ENCODE measurements at regions of chrX and their contacts with region 1.

Region 1: GRCh38 chrX:115906276-115906675 is 264.3 kb upstream of the AGTR2 start:
- DNase-seq: no peak
- H3K4me3 ChIP-seq: no peak overlapping the region
- H3K27ac ChIP-seq: no peak overlapping the region
- H3K4me1 ChIP-seq: no peaks in the 10 kb centered on the region
- H3K27me3 ChIP-seq: peaks cover 3% of the 10 kb centered on the region
- CTCF ChIP-seq: no peak

Region 2: DNA sequence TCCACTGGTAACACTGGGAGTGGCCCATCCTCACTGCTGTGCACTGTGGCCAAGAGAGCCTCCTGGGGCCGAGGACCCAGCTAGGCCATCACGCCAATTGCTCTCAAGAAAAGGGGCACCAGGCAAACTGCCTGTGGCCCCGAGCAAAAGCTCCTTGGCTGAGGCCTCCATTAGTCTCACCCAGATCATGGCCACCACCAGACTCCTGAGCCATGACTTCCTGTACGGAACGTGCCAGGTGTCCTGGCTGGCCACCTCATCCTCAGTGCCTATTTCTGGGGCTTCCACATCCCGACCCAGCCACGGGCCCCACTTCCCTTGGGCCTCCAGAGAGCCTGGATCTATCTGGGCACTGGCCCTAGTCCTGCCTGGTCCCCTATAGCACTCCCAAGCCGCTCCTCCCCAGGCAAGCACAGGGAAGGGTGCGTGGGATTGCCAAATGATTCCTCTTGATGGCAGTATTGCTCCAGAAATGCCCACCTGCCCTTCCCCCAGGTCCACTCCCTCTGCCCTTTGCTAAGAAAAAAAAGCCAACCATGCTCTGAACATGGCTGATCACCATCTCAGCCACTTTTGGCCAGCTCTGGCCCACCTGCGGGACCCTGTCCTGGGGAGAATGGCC is 51.7 kb after region 1 on chrX:
- intact Hi-C with region 1: loop called (anchors 5 kb)
- DNase-seq: no peak
- H3K4me3 ChIP-seq: no peak overlapping the region
- H3K27ac ChIP-seq: no peak overlapping the region
- H3K4me1 ChIP-seq: no peaks in the 10 kb centered on the region
- H3K27me3 ChIP-seq: no peaks in the 10 kb centered on the region
- CTCF ChIP-seq: no peak

Measured in colonic mucosa (tissue), 4 donors.